ENCODE measurements at regions of chr1 and their contacts with region 1.

Region 1: DNA sequence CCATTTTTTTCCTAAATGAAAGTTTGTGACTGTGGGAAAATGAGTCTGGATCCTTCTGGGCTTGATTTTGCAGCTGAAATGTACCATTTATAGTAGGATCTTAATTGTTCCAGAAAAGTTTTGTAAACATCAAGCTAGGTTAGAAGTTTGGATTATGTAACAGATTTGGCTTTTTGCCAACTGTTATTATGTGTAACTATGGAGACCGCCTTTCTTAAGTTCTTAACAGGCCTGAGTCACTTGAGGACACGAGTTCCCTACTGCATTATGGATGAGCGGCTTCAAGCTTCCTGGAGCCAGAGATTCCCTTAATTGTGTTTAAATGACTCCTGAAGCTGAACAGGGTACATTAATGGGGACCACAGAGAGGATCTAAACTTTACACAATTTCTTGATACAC is 22.2 kb downstream of the SLC25A33 start:
- DNase-seq: peak; percentile 38

Region 2: GRCh38 chr1:9292361-9293240 is 268.8 kb before region 1 on chr1 and contains the start of gene SPSB1:
- in situ Hi-C with region 1: loop called (anchors 25 kb)
- DNase-seq: peak; percentile 19
- total RNA-seq, gene SPSB1: 25.1 and 38.8 TPM in 2 replicates

Measured in G401 (cell line).